Heart right ventricle (tissue), 16 donors: ENCODE measurements at regions of chr20 and their contacts with region 1.

Region 1: GRCh38 chr20:52242237-52243230 is 51.0 kb upstream of the ZFP64 start:
- DNase-seq: no peak
- ATAC-seq: no peak
- H3K4me3 ChIP-seq: no peak overlapping the region
- H3K27ac ChIP-seq: no peak overlapping the region
- H3K4me1 ChIP-seq: no peaks in the 10 kb centered on the region
- H3K27me3 ChIP-seq: peaks cover 0 to 18% (median 6%) of the 10 kb centered on the region in 7 donors
- CTCF ChIP-seq: peak; percentile 54 to 78 (median 69)

Region 2: DNA sequence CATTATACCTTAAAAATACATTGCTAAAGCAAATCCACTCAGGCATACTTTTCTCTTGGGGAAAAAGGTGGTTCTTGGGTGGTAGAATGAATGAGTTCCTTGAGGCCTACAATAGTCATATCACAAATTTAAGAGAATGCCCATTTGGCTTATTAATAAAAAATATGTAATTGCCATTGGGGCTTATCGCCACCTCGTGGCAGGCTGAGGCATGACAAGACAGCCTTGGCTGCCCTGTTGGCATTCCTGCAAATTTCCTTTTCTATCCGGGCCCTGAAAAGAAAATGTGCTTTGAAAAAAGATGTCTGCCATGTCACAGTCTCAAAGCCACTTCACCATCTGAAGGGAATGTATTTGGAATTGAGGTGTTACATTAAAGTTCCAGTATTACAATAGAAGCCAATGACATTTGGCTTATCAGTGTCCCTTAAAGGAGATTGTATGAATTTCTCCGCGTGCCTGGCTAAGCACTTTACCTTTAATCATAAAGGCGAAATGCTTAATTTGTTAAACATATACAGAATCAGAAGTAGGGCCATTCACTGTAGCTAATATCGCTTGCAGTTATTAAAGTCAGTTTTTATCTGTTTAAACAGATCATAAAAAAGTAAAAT is 137.3 kb after region 1 on chr20:
- intact Hi-C with region 1: loop called in 6 of 10 experiments (anchors 5 to 10 kb)
- DNase-seq: peak; percentile 15 to 33
- ATAC-seq: no peak
- H3K4me3 ChIP-seq: no peak overlapping the region
- H3K27ac ChIP-seq: no peak overlapping the region
- H3K4me1 ChIP-seq: no peaks in the 10 kb centered on the region
- H3K27me3 ChIP-seq: no peaks in the 10 kb centered on the region
- CTCF ChIP-seq: peak; percentile 58 to 97 (median 92)